ENCODE measurements at regions of chrX and their contacts with region 1.

Region 1: DNA sequence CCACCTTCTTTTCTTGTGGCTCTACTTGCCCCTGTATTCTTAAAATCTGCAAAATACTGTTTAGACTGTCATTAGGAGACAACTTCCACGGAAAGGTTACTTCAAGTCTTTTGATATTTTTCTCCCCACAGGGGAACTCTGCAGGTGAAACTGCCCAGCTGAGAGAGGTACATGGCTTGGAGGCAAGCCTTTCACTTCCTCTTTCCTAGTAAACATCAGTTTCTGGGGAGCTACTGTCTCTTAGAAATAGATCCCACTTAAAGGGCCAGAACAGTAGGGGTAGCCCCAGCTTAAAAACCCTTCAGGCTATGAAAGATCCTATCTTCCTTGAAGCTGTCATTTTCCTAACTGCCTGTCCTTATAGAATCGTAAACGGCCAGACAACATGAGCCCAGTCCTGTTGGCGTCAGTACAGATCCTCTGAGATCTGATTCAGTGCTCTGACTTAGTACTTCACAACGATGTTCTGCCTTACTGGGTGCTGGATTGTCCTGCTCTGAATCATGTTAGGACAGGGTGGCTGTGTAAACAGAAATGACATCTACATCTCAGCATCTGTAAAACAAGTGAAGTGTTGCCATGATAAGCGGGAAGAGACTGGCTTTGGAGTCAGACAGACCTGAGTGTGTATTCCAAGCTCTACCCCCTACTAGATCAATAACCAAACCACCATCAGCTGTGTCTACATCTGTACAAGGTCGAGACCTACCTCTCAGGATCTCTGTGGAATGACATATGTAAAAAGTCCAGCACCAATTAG is 102.1 kb downstream of the ITIH6 start:
- DNase-seq: no peak
- ATAC-seq: no peak
- H3K4me3 ChIP-seq: no peak overlapping the region
- H3K27ac ChIP-seq: no peak overlapping the region
- H3K4me1 ChIP-seq: no peaks in the 10 kb centered on the region
- H3K27me3 ChIP-seq: no peaks in the 10 kb centered on the region
- CTCF ChIP-seq: no peak

Region 2: DNA sequence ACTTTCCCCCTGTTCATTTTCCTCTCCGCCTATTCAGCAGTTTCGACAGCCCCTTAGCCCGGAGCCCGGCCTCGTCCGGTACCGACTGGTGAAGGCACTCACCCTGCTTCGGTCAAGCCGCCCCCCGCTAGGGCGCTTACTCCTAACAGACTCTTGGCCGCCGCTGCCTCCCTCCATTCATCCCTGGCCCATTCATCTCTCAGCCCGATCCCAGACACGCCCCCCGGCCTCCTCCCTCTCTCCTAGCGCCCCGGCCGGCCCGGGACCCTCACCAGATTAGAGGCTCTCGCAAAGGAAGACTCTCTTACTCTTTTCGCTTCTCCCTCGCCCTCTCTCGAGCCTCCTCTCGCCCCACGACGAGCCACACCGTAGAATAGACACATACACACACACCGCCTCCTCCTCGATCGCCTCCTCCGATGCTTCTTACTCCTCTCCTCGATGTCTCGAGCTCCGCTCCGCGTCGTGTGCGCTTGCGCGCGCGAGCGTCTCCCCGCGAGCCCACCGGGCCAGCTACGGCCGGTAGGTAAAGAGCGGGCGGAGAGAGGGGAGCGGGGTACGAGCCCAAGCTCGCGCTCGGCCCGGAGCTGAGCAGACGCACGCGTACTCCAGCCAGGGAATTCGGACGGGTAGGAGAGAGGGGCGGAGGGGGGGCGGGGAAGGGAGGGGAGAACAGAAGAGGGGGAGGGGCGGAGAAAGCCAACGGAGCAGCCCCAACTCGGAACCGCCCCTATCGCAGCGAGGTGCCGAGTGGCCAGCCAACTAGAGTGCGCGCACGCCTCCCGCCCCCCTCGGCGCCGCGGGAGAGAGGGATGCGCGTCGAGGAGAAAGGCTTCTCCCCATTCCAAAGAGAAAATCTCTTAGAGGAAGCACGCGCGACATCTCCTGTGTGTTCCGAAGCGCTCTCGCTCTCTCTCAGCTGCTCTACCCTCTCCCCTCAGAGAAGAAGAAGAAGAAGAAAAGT is 338.3 kb before region 1 on chrX and contains the start of gene WNK3:
- intact Hi-C with region 1: no loop called
- DNase-seq: peak; percentile 70 to 74
- ATAC-seq: peak; percentile 90 to 96 (median 95)
- H3K4me3 ChIP-seq: peak within 1 kb of the TSS; percentile 35 to 64 (median 54)
- H3K27ac ChIP-seq: peak within 1 kb of the TSS in 2 of 10 donors; percentile 18 to 19
- H3K4me1 ChIP-seq: peaks cover 0 to 10% (median 3%) of the 10 kb centered on the region in 9 donors
- H3K27me3 ChIP-seq: peaks cover 0 to 66% (median 0%) of the 10 kb centered on the region in 7 donors
- CTCF ChIP-seq: no peak
- total RNA-seq, gene WNK3: 0.19 to 2.3 (median 0.36) TPM

Region 3: DNA sequence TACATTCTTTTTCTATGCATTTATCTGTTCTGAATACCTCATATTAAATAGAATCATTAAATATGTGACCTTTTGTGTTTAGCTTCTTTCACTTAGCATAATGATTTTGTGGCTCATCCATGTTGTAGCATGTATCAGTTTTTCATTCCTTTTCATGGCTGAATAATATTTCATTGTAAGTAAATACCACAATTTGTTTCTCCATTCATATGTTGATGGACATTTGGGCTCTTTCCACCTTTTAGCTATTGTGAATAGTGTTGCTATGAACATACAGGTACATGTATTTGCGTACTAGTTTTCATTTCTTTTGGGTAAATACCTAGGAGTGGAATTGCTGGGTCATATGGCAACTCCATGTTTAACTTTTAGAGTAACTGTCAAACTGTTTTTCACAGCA is 80.9 kb before region 1 on chrX:
- intact Hi-C with region 1: no loop called
- DNase-seq: no peak
- ATAC-seq: no peak
- H3K4me3 ChIP-seq: no peak overlapping the region
- H3K27ac ChIP-seq: no peak overlapping the region
- H3K4me1 ChIP-seq: no peaks in the 10 kb centered on the region
- H3K27me3 ChIP-seq: no peaks in the 10 kb centered on the region
- CTCF ChIP-seq: no peak

Region 4: DNA sequence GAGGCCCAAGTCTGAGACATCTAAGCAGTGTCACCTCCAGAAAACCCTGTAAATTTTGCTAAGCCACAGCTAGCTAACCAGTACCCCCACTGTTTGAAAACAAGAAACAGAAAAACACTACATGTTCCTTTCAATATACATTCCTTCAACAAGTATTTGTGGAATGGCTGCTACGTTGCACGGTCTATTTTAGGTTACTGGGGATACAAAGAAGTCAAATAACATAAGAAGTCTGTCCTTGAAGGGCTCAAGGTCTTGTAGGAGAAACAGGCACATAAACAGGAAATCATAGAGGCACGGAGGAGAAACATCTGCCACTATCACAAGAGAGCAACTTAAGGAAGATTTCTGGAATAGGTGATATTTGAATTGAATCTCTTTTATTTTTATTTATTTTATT is 349.7 kb after region 1 on chrX:
- intact Hi-C with region 1: loop called in 1 of 10 experiments (anchors 10 kb)
- DNase-seq: no peak
- ATAC-seq: no peak
- H3K4me3 ChIP-seq: no peak overlapping the region
- H3K27ac ChIP-seq: no peak overlapping the region
- H3K4me1 ChIP-seq: no peaks in the 10 kb centered on the region
- H3K27me3 ChIP-seq: no peaks in the 10 kb centered on the region
- CTCF ChIP-seq: no peak